Ascending aorta (tissue), 2 donors: ENCODE measurements at regions of chr22 and their contacts with region 1.

Region 1: GRCh38 chr22:42270512-42271417 is at the start of gene TCF20:
- DNase-seq: peak in 1 of 2 donors; percentile 85
- H3K4me3 ChIP-seq: peak within 1 kb of the TSS; percentile 96 to 99
- H3K27ac ChIP-seq: peak within 1 kb of the TSS; percentile 77 to 88
- H3K4me1 ChIP-seq: peaks cover 0 to 9% of the 10 kb centered on the region in 2 donors
- H3K27me3 ChIP-seq: no peaks in the 10 kb centered on the region
- CTCF ChIP-seq: no peak
- total RNA-seq, gene TCF20: 11.9 TPM

Region 2: GRCh38 chr22:41832553-41833368 is 438.0 kb before region 1 on chr22 and contains the start of gene SREBF2:
- intact Hi-C with region 1: no loop called
- DNase-seq: peak; percentile 99 to 100
- H3K4me3 ChIP-seq: peak within 1 kb of the TSS; percentile 90 to 97
- H3K27ac ChIP-seq: peak within 1 kb of the TSS; percentile 92
- H3K4me1 ChIP-seq: peaks cover 0 to 5% of the 10 kb centered on the region in 2 donors
- H3K27me3 ChIP-seq: no peaks in the 10 kb centered on the region
- CTCF ChIP-seq: peak in 1 of 3 experiments; percentile 8
- total RNA-seq, gene SREBF2: 46.1 TPM

Region 3: DNA sequence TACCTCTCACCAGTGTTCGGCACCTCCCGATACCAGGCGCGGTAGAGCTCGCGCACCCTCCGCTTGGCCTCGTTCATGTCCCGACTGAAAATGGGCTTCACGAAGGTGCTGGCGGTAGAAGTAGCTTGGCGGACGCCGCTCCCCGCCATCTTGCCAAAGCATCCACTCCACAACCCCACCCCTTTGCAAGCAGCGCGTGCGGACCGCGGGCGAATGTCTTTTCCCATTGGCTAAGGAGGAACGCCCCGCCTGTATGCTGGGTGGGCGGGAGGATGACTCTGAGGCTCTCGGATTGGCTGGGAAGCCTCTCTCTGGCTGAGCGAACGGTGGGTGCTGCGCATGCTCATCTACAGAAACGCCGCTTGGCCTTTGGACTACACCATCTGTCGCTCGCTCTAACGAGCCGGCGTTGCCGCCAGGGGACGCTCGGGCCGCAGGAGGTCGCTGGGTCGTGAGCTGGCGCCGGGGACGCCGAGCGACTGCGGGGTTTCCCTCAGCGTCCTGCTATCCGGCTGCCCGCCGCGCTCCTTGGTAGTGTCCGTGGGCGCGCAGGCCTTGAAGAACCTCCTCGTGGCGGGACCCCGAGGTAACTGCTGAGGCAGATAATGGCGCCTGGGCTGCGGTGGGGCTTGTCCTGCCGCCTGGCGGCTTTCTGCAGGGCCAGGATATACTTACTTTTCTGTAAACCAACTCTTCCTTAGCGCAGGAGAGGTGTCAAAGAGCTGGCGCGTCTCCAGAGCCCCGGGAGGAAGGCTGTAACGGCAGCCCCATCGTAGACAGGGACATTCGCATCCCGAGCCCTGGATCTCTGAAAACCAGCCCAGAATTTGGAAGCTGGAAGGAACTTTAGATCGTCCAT is 179.9 kb before region 1 on chr22 and contains the start of gene NDUFA6:
- intact Hi-C with region 1: loop called (anchors 2 kb)
- DNase-seq: peak; percentile 98 to 99
- H3K4me3 ChIP-seq: peak within 1 kb of the TSS; percentile 79 to 91
- H3K27ac ChIP-seq: peak within 1 kb of the TSS; percentile 93 to 97
- H3K4me1 ChIP-seq: peaks cover 5 to 16% of the 10 kb centered on the region in 2 donors
- H3K27me3 ChIP-seq: no peaks in the 10 kb centered on the region
- CTCF ChIP-seq: peak; percentile 90 to 98 (median 95)
- total RNA-seq, gene NDUFA6: 23.9 TPM

Region 4: DNA sequence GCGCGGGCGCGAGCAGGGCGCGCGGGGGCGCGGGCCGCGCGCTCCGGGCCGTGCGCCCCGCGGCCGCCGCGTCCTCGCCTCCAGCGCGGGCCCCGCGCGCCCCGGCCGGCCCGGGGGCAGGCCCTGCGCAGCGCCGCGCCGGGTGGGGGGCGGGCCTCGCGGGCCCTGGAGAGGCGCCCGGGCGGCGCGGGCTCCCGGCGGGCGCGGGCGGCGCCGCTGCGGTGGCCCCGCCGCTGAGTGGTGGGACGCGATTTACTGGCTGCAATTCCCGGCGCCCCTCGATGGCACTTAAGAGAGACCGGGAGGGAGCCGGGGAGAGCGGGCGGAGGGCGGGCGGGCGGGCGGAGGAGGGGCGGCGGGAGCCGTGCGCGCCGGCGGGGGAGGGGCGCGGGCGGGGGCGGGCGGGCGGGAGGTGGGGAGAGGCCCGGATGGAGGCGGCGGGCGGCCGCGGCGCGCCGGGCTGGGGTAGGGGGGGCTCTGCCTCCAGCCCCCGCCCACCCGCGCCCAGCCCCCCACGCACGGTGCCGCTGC is 72.9 kb after region 1 on chr22:
- intact Hi-C with region 1: loop called (anchors 5 kb)
- DNase-seq: no peak
- H3K4me3 ChIP-seq: peak overlapping the region; percentile 54 to 71
- H3K27ac ChIP-seq: peak overlapping the region; percentile 77 to 81
- H3K4me1 ChIP-seq: peaks cover 0 to 6% of the 10 kb centered on the region in 2 donors
- H3K27me3 ChIP-seq: no peaks in the 10 kb centered on the region
- CTCF ChIP-seq: no peak

Region 5: GRCh38 chr22:42369245-42370041 is 98.7 kb after region 1 on chr22:
- intact Hi-C with region 1: loop called (anchors 1 kb)
- DNase-seq: peak; percentile 85 to 94
- H3K4me3 ChIP-seq: peak overlapping the region; percentile 65 to 66
- H3K27ac ChIP-seq: no peak overlapping the region
- H3K4me1 ChIP-seq: peaks cover 20 to 37% of the 10 kb centered on the region in 2 donors
- H3K27me3 ChIP-seq: no peaks in the 10 kb centered on the region
- CTCF ChIP-seq: no peak

Region 6: GRCh38 chr22:42553475-42554361 is 283.0 kb after region 1 on chr22 and contains the start of gene SERHL2:
- intact Hi-C with region 1: loop called (anchors 10 kb)
- DNase-seq: peak; percentile 47 to 92
- H3K4me3 ChIP-seq: peak within 1 kb of the TSS; percentile 70 to 81
- H3K27ac ChIP-seq: peak within 1 kb of the TSS; percentile 12 to 26
- H3K4me1 ChIP-seq: peaks cover 5 to 9% of the 10 kb centered on the region in 2 donors
- H3K27me3 ChIP-seq: no peaks in the 10 kb centered on the region
- CTCF ChIP-seq: peak in 1 of 3 experiments; percentile 4
- total RNA-seq, gene SERHL2: 3.1 TPM

Region 7: DNA sequence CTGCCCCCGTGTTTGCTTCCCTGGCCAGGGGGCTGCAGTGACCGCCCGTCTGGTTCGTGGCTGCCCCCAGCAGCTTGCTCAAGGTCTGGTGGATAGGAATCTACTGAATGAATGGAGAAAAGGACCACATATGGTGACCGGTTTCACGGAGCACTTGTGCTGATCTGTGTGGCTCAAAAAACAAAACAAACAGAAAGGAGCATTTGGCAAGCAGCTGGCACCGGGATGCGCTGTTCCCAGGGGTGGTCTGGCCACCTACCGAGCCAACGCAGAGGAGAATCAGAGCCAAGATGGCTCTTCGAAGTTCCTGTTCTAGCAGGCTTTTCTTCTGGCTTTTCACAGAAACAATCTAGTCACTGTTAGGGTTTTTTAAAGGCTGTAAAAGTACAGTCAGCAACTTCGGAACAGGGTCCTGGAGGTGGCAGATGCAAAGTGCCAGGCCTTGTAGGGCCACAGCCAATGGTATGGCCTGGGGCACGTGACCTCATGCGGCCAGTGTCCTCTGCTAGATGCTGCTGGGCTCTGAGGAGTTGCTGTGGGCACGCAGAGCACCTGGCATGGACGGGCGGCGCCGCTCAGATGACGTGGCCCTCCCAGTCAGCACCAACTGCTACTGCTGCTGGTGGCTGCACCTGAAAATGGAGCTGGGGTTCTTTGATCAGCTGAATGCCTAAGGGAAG is 771.5 kb after region 1 on chr22:
- intact Hi-C with region 1: no loop called
- DNase-seq: no peak
- H3K4me3 ChIP-seq: no peak overlapping the region
- H3K27ac ChIP-seq: no peak overlapping the region
- H3K4me1 ChIP-seq: no peaks in the 10 kb centered on the region
- H3K27me3 ChIP-seq: no peaks in the 10 kb centered on the region
- CTCF ChIP-seq: no peak